T-cell (primary cell): ENCODE measurements at regions of chr4 and their contacts with region 1.

Region 1: DNA sequence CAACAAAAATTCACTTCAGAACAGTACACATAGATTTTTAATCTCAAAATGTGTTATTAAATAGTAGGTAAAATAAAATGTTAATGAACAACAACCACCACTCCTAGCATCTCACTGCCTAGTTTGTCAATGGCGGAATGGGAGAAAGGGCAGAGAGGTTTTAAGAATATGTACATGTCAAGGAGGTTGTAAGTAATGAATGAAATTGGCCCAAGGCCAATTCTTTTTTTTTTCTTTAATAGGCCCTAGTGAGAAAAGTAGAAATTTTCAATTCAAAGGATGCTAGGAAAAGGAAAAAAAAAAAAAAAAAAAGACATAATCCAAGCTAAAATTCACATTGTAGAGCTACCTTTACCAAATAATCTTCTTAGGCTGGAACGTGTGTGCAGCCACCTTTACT is 16.3 kb upstream of the ARHGAP24 start:
- DNase-seq: no peak
- ATAC-seq: no peak
- H3K4me3 ChIP-seq: no peak overlapping the region
- H3K4me3 Mint-ChIP-seq: no peak overlapping the region
- H3K27ac ChIP-seq: no peak overlapping the region
- H3K27ac Mint-ChIP-seq: no peak overlapping the region
- H3K4me1 ChIP-seq: no peaks in the 10 kb centered on the region
- H3K4me1 Mint-ChIP-seq: no peaks in the 10 kb centered on the region
- H3K27me3 ChIP-seq: no peaks in the 10 kb centered on the region
- H3K27me3 Mint-ChIP-seq: no peaks in the 10 kb centered on the region

Region 2: DNA sequence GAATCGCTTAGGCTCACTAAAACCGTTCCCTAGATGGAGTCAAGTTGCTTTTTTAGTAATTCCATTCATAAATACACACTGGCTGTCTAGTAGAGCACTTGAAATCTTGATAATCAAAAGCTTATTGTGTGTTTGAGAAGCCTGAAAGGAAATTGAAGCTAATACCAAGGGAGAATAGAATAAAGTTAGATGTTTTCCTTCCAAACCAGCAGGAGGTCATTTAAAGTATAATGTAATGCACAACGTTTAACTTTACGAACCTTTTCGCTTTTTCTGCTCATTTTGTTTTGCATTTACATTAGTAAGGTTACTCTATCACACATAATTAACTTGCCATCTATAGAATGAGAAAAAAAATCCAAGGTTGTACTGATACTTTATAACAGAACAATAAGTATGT is 1400.5 kb before region 1 on chr4:
- CTCF ChIA-PET with region 1: no interaction called
- POLR2A ChIA-PET with region 1: no interaction called
- DNase-seq: no peak
- ATAC-seq: no peak
- H3K4me3 ChIP-seq: no peak overlapping the region
- H3K4me3 Mint-ChIP-seq: no peak overlapping the region
- H3K27ac ChIP-seq: no peak overlapping the region
- H3K27ac Mint-ChIP-seq: no peak overlapping the region
- H3K4me1 ChIP-seq: no peaks in the 10 kb centered on the region
- H3K4me1 Mint-ChIP-seq: no peaks in the 10 kb centered on the region
- H3K27me3 ChIP-seq: no peaks in the 10 kb centered on the region
- H3K27me3 Mint-ChIP-seq: no peaks in the 10 kb centered on the region

Region 3: DNA sequence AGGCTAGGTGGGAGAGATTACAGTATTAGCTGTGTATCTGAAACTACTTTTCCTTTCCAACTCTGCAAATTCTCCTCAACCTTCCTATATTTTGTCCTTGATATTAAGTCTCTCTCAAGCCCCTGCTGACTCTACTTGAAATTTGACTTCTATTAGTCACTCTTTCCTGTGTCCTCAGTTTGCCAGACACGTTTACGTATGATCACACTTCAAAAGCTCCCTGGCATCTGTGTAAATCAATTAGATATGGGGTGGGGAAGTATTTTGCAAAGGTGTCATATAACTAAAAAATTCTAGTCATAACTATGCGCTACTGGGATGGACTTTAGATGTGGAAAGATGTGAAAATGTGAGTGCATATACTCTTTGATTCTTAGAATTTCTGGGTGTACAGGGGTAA is 51.1 kb before region 1 on chr4:
- CTCF ChIA-PET with region 1: interaction called in 1 of 2 experiments, 16 read pairs
- POLR2A ChIA-PET with region 1: no interaction called
- DNase-seq: no peak
- ATAC-seq: no peak
- H3K4me3 ChIP-seq: no peak overlapping the region
- H3K4me3 Mint-ChIP-seq: no peak overlapping the region
- H3K27ac ChIP-seq: no peak overlapping the region
- H3K27ac Mint-ChIP-seq: no peak overlapping the region
- H3K4me1 ChIP-seq: no peaks in the 10 kb centered on the region
- H3K4me1 Mint-ChIP-seq: no peaks in the 10 kb centered on the region
- H3K27me3 ChIP-seq: no peaks in the 10 kb centered on the region
- H3K27me3 Mint-ChIP-seq: no peaks in the 10 kb centered on the region

Region 4: GRCh38 chr4:85419103-85419502 is 39.6 kb before region 1 on chr4:
- CTCF ChIA-PET with region 1: no interaction called
- POLR2A ChIA-PET with region 1: no interaction called
- DNase-seq: no peak
- ATAC-seq: no peak
- H3K4me3 ChIP-seq: no peak overlapping the region
- H3K4me3 Mint-ChIP-seq: no peak overlapping the region
- H3K27ac ChIP-seq: no peak overlapping the region
- H3K27ac Mint-ChIP-seq: no peak overlapping the region
- H3K4me1 ChIP-seq: no peaks in the 10 kb centered on the region
- H3K4me1 Mint-ChIP-seq: no peaks in the 10 kb centered on the region
- H3K27me3 ChIP-seq: no peaks in the 10 kb centered on the region
- H3K27me3 Mint-ChIP-seq: no peaks in the 10 kb centered on the region

Region 5: GRCh38 chr4:86965019-86965976 is 1506.6 kb after region 1 on chr4:
- CTCF ChIA-PET with region 1: no interaction called
- POLR2A ChIA-PET with region 1: no interaction called
- DNase-seq: no peak
- ATAC-seq: no peak
- H3K4me3 ChIP-seq: no peak overlapping the region
- H3K4me3 Mint-ChIP-seq: no peak overlapping the region
- H3K27ac ChIP-seq: no peak overlapping the region
- H3K27ac Mint-ChIP-seq: no peak overlapping the region
- H3K4me1 ChIP-seq: peaks cover 5 to 18% of the 10 kb centered on the region in 2 experiments
- H3K4me1 Mint-ChIP-seq: peaks cover 24 to 30% (median 29%) of the 10 kb centered on the region in 3 donors
- H3K27me3 ChIP-seq: no peaks in the 10 kb centered on the region
- H3K27me3 Mint-ChIP-seq: no peaks in the 10 kb centered on the region